ENCODE measurements at regions of chr17 and their contacts with region 1.

Region 1: GRCh38 chr17:68291844-68292695 is 775 bp downstream of the ARSG start:
- DNase-seq: peak; percentile 77
- ATAC-seq: peak; percentile 86
- H3K4me3 ChIP-seq: peak overlapping the region; percentile 74 to 80 (median 79)
- H3K27ac ChIP-seq: peak overlapping the region; percentile 72
- H3K4me1 ChIP-seq: peaks cover 57% of the 10 kb centered on the region
- H3K27me3 ChIP-seq: peaks cover 0 to 3% of the 10 kb centered on the region in 2 experiments; a peak in 1 of 5 replicates
- CTCF ChIP-seq: peak; percentile 49
- EP300 ChIP-seq: 0 out of 4 replicates have a peak, but pooled peaks of 1 of the 2 experiments have one; percentile 4
- POLR2A ChIP-seq: peak in 1 of 2 experiments; percentile 34; a peak in 3 of 4 replicates
- RAD21 ChIP-seq: peak; percentile 60

Region 2: GRCh38 chr17:68190495-68190894 is 101.6 kb before region 1 on chr17:
- CTCF ChIA-PET with region 1: no interaction called
- POLR2A ChIA-PET with region 1: no interaction called
- in situ Hi-C with region 1: no loop called
- intact Hi-C with region 1: no loop called
- DNase-seq: no peak
- ATAC-seq: no peak
- H3K4me3 ChIP-seq: no peak overlapping the region
- H3K27ac ChIP-seq: no peak overlapping the region
- H3K4me1 ChIP-seq: no peaks in the 10 kb centered on the region
- H3K27me3 ChIP-seq: peaks cover 0 to 22% of the 10 kb centered on the region in 2 experiments; a peak in 3 of 5 replicates
- CTCF ChIP-seq: no peak
- EP300 ChIP-seq: no peak
- POLR2A ChIP-seq: no peak
- RAD21 ChIP-seq: no peak

Region 3: DNA sequence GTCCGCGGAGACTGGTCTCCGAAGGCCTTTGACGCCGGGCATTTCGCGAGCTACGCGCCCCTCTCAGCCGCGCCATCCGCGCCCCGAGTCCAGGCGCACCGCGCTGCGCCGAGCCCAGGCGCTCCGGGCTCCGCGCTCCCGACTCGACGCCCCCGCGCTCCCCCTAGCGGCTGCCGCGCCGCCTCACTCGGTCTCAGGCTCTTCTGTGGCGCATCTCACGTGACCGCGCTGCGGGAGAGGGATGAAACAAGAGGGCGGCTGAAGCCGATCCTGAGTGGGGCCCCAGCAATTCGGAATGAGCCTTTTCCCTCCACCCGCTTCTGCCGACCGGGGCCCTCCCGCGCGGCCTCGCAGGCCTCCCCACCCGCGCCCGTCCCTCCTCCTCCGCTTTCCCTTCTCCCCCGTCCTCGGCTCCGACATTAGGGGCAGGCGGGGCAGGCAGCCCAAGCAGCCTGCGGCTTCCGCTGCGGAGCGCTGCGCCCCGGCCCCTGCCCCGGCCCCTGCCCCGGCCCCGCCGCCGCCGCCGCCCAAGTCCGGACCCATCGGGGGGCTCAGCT is 86.7 kb before region 1 on chr17:
- CTCF ChIA-PET with region 1: no interaction called
- POLR2A ChIA-PET with region 1: no interaction called
- in situ Hi-C with region 1: no loop called
- intact Hi-C with region 1: no loop called
- DNase-seq: peak; percentile 80
- ATAC-seq: peak; percentile 88
- H3K4me3 ChIP-seq: peak overlapping the region; percentile 68 to 85 (median 84); a peak in 5 of 6 replicates
- H3K27ac ChIP-seq: peak overlapping the region; percentile 22
- H3K4me1 ChIP-seq: peaks cover 35% of the 10 kb centered on the region
- H3K27me3 ChIP-seq: peaks cover 0 to 27% of the 10 kb centered on the region in 2 experiments; a peak in 4 of 5 replicates
- CTCF ChIP-seq: peak; percentile 95
- EP300 ChIP-seq: 0 out of 4 replicates have a peak, but pooled peaks have one; percentile 5 to 14
- POLR2A ChIP-seq: peak in 1 of 2 experiments; percentile 64; a peak in 3 of 4 replicates
- RAD21 ChIP-seq: peak; percentile 89

Region 4: DNA sequence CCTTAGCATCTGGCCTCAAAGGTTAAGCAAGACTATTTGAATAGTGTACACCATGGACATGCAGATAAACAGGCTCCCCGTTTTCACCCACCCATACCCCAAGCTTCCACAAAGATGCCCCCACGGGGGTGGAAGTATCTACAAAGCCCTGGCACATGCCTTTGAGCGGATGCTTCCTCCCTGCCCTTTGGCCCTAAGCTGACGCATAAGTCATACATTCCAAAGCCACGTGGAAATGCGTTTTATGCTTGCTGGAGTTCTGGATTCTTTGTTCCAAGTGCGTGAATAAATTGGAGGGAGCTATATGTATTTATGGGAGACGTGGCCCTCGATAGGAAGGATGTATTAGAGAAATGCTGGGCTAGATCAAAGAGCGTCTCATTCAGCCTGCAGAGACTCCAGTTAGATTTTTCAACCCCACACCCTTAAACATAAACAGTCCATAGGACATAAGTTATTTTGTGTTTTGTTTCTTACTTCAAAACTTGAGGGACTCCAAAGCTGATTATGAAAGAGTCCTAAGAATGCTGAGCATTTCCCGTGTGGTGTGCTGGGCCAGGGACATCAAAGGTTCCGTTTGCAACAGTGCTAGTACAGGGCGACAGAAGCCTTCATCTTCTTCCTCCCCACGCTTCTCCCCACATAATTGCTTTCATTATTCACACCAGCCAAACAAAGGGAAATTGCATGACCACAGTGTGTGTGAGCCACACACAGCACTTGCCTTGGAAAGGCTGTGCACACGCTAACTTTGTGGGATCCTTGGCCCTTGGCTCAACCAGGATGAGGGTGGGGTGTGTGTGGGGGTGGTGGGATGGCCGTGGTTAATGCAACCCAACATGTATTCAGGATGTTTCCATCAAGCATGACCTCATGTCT is 91.6 kb after region 1 on chr17:
- CTCF ChIA-PET with region 1: no interaction called
- POLR2A ChIA-PET with region 1: interaction called, 30 read pairs
- in situ Hi-C with region 1: loop called (anchors 5 kb)
- intact Hi-C with region 1: loop called (anchors 2 kb)
- DNase-seq: peak; percentile 99
- ATAC-seq: peak; percentile 74
- H3K4me3 ChIP-seq: no peak overlapping the region
- H3K27ac ChIP-seq: peak overlapping the region; percentile 97
- H3K4me1 ChIP-seq: peaks cover 100% of the 10 kb centered on the region
- H3K27me3 ChIP-seq: no peaks in the 10 kb centered on the region
- CTCF ChIP-seq: peak; percentile 18; the same call in 1 of the 2 replicates
- EP300 ChIP-seq: peak; percentile 84 to 98
- POLR2A ChIP-seq: peak in 1 of 2 experiments; percentile 63; a peak in 3 of 4 replicates
- RAD21 ChIP-seq: peak; percentile 41